HepG2 (cell line): ENCODE measurements at regions of chr18 and their contacts with region 1.

Region 1: DNA sequence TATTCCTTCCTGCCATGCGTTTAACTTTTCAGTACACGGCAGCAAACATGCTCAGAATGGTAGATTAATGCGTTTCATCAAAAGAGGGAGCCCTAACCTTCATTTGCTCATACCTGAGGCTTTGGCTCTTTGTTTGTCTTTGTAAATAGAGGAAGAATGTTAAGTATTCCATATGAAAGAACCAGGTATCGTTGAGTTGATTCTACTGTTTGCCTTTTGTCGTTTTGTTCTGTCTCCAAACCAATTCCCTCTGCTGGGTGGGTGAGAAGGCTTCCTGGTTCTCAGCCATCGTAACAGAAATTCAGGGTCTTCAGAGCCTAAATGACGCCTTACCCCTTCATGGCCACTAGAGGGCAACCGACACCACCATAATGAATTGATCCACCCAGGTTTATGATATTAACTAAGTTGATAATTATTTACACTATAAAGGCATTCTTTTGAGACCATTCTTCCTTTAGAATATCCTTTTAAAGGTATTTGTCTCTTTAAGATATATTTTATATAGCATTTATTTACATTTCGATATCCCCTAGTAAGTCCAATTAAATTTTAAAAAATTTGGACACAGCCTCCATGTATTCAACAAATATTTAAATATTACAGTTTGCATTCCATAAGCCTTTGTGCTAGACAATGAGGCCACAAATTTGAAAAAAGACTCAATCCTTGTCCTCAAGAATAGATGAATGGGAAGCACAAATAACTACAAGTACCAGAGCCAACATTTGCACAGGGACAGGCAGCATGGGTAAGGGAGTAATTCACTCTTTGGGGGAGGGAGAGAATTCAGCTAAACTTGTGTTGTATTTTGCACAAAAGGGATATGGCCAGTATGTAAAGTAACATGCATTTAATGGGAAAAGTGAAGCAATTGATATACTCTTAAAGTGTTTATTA is 48.1 kb downstream of the TIMM21 start:
- DNase-seq: peak; percentile 76
- ATAC-seq: peak; percentile 72
- H3K4me3 ChIP-seq: peak overlapping the region; percentile 9 to 53 (median 25); a peak in 3 of 6 replicates
- H3K27ac ChIP-seq: no peak overlapping the region
- H3K4me1 ChIP-seq: peaks cover 49% of the 10 kb centered on the region
- H3K27me3 ChIP-seq: peaks cover 0 to 2% of the 10 kb centered on the region in 2 experiments; a peak in 2 of 5 replicates
- CTCF ChIP-seq: peak; percentile 84
- EP300 ChIP-seq: no peak
- POLR2A ChIP-seq: no peak
- RAD21 ChIP-seq: peak; percentile 84

Region 2: DNA sequence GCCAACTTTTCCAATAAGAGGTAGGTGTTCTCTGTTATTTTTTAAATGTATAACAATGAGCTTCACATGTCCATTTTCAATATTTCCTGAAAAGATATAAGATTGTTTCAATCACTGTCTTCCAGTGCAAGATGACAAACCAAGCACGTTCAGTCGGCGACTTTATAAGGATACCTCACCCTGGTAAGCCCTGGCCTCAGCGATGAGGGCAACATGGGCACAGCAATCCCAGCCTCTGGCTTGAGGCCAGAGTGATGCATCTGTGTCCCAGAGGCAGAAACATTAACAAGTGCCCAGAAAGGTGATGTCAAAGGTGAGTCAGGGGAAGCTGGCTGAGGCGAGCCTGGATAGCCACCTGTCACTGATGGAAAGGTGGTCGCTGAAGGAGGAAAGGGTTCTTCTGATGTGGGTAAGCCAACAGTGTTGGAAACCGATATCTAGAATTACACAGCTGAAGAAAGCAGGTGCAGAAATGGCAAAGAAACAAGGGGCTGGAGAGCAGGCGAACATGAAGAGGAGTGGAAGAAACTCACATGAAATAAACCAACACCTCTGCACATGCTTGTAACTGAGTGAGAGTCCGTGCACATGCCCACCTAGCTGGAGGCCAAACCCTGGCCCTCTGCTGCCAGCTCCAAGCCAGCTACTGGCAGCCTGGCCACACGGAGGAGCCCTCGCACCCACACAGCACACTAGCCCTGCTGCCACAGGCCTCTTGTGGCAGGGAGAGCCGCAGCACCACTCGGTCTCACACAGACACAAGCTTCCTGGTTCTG is 114.3 kb before region 1 on chr18:
- CTCF ChIA-PET with region 1: no interaction called
- POLR2A ChIA-PET with region 1: no interaction called
- in situ Hi-C with region 1: no loop called
- intact Hi-C with region 1: loop called (anchors 1 kb)
- DNase-seq: peak; percentile 65
- ATAC-seq: peak; percentile 100
- H3K4me3 ChIP-seq: peak overlapping the region in 2 of 3 experiments; percentile 6 to 21; a peak in 4 of 6 replicates
- H3K27ac ChIP-seq: no peak overlapping the region
- H3K4me1 ChIP-seq: peaks cover 12% of the 10 kb centered on the region; the same call in 1 of the 2 replicates
- H3K27me3 ChIP-seq: peaks cover 0 to 38% of the 10 kb centered on the region in 2 experiments
- CTCF ChIP-seq: peak; percentile 87
- EP300 ChIP-seq: no peak
- POLR2A ChIP-seq: no peak
- RAD21 ChIP-seq: peak; percentile 71

Region 3: DNA sequence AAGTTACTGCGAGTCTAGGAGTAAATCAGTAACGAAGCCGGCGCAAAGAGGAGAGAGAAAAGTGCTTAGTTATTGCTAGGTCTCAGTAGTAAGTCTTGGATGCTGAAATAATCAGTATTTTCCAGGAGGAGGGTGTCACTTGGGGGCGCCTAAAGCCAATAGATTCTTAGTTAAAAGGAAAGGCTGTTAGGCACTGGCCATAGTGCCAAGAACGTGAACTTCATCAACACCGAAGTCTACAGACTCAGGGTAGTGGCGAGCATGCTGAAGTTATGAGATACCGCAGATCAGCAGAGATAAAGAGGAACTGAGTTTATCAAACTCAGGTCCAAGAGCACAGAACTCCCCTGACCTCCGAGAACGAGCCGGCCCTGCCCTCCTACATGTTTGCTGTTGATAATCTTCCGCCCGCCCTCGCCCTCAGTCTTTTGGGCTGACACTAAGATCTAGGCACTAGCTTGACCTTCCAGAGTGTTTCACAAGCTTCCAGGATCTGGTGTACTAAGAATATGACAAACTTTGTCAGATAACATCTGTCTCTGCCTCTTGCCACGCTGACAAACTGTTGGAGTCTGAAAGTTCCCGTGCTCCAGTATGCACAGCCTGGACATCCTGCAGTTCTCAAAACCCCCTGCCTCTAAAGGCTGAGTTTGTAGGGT is 46.1 kb after region 1 on chr18:
- CTCF ChIA-PET with region 1: no interaction called
- POLR2A ChIA-PET with region 1: no interaction called
- in situ Hi-C with region 1: no loop called
- intact Hi-C with region 1: loop called (anchors 2 kb)
- DNase-seq: peak; percentile 65
- ATAC-seq: peak; percentile 84
- H3K4me3 ChIP-seq: peak overlapping the region; percentile 26 to 60 (median 37)
- H3K27ac ChIP-seq: peak overlapping the region; percentile 78
- H3K4me1 ChIP-seq: peaks cover 47% of the 10 kb centered on the region
- H3K27me3 ChIP-seq: no peaks in the 10 kb centered on the region
- CTCF ChIP-seq: peak; percentile 78
- EP300 ChIP-seq: peak in 1 of 2 experiments; percentile 4; a peak in 1 of 4 replicates
- POLR2A ChIP-seq: peak; percentile 23 to 31; a peak in 2 of 4 replicates
- RAD21 ChIP-seq: 0 out of 2 replicates have a peak, but pooled peaks have one; percentile 21

Region 4: DNA sequence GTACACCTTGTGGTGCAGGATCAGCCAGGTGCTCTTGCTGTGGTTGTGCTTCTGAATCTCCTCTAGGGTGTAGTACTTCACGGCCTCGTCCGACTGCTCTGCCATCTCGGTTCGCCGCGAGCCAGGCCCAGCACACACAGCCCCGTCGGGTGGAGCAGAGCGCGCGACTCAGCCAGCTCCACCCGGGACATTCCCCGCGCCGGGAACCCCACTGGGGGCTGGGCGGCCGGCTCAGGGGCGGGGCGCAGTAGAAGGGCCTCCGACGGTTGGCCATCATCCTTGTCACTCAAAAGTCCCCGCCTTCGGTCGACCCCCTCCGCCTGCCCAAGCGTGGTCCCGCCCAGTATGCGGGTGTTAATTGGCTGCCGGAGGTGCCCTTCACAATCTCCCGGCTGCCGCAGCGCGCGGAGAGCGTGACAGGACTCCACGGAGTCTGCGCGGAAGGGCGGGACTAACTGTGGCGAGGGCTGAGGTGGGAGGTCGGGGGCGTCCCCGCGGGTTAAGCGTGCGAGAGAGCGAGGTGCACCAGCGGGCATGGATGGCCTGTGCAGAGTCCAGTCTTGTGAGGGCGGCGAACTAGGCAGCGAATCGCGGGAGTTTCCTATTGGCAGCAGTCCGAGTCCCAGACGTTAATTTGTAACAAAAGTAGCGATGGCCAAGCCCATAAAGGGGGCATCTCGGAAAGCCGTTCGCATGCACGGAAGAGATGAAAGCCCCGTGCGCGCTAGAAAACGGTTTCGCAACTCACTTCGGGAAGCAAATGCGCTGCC is 95.5 kb after region 1 on chr18 and contains the start of gene CYB5A:
- CTCF ChIA-PET with region 1: interaction called, 14 read pairs
- POLR2A ChIA-PET with region 1: no interaction called
- in situ Hi-C with region 1: loop called (anchors 5 kb)
- intact Hi-C with region 1: loop called (anchors 1 kb)
- DNase-seq: peak; percentile 98
- ATAC-seq: peak; percentile 93
- H3K4me3 ChIP-seq: peak within 1 kb of the TSS; percentile 82 to 94 (median 91)
- H3K27ac ChIP-seq: peak within 1 kb of the TSS; percentile 94
- H3K4me1 ChIP-seq: peaks cover 50% of the 10 kb centered on the region
- H3K27me3 ChIP-seq: no peaks in the 10 kb centered on the region; a peak in 1 of 5 replicates
- CTCF ChIP-seq: peak; percentile 13; the same call in 1 of the 2 replicates
- EP300 ChIP-seq: peak; percentile 26 to 74; a peak in 2 of 4 replicates
- POLR2A ChIP-seq: peak; percentile 60 to 72
- RAD21 ChIP-seq: 0 out of 2 replicates have a peak, but pooled peaks have one; percentile 32
- total RNA-seq, gene CYB5A: 356 and 411 TPM in 2 replicates

Region 5: DNA sequence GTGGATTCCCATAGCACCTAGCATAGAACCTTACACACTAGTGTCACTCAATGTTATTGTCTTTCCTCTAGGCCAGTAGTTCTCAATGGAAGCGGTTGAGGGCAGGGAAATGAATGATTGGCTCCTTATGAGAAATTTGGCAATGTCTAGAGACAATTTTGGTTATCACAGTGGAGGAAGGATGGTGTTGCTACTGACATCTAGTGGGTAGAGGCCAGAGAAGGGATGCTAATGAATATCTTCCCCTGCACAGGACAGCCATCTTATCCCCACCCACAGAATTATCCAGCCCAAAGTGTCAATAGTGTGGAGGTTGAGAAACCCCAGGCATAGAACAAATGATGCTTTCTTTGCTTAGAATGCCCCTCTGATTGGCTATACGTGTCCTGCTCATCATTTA is 134.9 kb after region 1 on chr18:
- CTCF ChIA-PET with region 1: interaction called, 31 read pairs
- POLR2A ChIA-PET with region 1: no interaction called
- in situ Hi-C with region 1: loop called (anchors 5 kb)
- intact Hi-C with region 1: loop called (anchors 1 kb)
- DNase-seq: peak; percentile 43
- ATAC-seq: peak; percentile 87
- H3K4me3 ChIP-seq: no peak overlapping the region
- H3K27ac ChIP-seq: no peak overlapping the region
- H3K4me1 ChIP-seq: peaks cover 13% of the 10 kb centered on the region
- H3K27me3 ChIP-seq: no peaks in the 10 kb centered on the region
- CTCF ChIP-seq: peak; percentile 79
- EP300 ChIP-seq: no peak
- POLR2A ChIP-seq: no peak
- RAD21 ChIP-seq: peak; percentile 48; the same call in 1 of the 2 replicates

Region 6: DNA sequence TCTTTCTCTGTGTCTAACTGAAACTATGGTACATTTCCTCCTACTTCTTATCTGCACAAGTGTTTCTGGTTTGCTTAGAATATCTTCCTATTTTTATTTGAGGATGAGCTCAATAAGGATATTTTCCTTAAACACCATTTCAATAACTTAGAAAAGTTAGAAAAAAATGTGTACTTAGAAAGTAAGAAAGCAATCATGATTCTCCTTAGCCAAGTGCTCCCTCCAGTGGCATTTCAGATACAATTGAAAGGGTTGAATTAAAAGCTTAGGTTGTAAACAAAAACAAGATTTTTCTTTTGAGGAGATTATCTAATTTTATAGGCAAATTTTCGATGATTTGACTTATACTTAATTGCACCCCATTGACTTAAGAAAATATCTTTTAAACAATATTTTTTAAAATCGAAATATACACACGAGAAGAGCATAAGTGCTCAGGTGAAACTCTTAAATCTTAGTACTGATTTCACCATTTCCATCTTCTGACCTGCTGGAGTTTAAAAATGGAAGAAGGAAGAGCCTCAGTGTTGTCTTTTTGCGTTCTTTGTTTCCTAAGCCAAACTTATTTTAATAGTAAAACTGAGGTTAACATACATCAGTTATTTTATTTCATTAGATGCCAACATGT is 146.1 kb after region 1 on chr18:
- CTCF ChIA-PET with region 1: interaction called, 57 read pairs
- POLR2A ChIA-PET with region 1: no interaction called
- in situ Hi-C with region 1: no loop called
- intact Hi-C with region 1: loop called (anchors 1 kb)
- DNase-seq: peak; percentile 58
- ATAC-seq: no peak
- H3K4me3 ChIP-seq: no peak overlapping the region
- H3K27ac ChIP-seq: no peak overlapping the region
- H3K4me1 ChIP-seq: no peaks in the 10 kb centered on the region
- H3K27me3 ChIP-seq: no peaks in the 10 kb centered on the region; a peak in 1 of 5 replicates
- CTCF ChIP-seq: peak; percentile 70
- EP300 ChIP-seq: no peak
- POLR2A ChIP-seq: no peak
- RAD21 ChIP-seq: peak; percentile 69

Region 7: GRCh38 chr18:74551936-74552555 is 355.6 kb after region 1 on chr18:
- CTCF ChIA-PET with region 1: no interaction called
- POLR2A ChIA-PET with region 1: no interaction called
- in situ Hi-C with region 1: loop called (anchors 10 kb)
- intact Hi-C with region 1: loop called (anchors 2 kb)
- DNase-seq: peak; percentile 74
- ATAC-seq: peak; percentile 99
- H3K4me3 ChIP-seq: no peak overlapping the region
- H3K27ac ChIP-seq: no peak overlapping the region
- H3K4me1 ChIP-seq: peaks cover 16% of the 10 kb centered on the region
- H3K27me3 ChIP-seq: peaks cover 0 to 11% of the 10 kb centered on the region in 2 experiments; a peak in 3 of 5 replicates
- CTCF ChIP-seq: peak; percentile 91
- EP300 ChIP-seq: no peak
- POLR2A ChIP-seq: no peak
- RAD21 ChIP-seq: peak; percentile 68